Vagina (tissue), 2 donors: ENCODE measurements at regions of chr14 and their contacts with region 1.

Region 1: DNA sequence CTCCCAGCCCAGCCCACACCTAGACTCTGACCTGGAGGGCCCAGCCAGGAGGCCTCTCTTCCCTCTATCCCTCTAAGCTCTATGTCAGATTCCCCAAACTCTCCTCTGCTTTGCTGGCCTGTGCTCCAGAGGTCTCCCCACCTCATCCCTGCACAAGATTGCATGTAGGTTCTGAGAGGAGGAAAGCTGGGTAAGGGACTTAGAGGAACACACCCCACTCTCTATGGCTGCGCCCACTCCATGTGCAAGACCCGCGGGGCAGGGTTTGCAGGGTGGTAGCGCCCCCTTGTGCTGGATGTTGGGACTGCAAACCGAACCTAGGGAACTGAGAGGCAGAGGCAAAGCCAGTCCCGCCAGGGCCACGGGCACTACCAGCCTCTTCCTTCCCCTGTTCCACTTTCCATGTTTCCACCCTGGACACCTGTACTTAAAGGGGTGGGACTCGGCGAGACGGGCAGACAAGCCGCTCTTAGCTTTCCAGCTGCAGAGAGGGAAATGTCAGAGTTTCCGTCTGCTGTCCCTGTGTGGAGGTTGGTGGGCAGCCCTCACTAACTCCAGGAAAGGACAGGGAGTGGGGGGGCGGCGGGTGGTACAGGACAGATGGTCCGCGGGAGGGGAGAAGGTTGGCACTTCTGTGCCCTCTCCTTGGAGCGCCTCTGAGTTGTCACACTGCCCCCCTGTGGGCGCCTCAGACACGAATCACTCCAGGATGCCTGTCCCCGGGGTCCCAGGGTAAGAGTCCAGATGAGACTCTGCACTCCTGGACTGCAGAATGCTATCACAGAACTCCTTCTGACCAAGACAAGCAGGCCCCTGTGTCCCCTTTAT is 16.8 kb downstream of the MMP14 start:
- DNase-seq: no peak
- H3K4me3 ChIP-seq: peak overlapping the region; percentile 35 to 40
- H3K27ac ChIP-seq: peak overlapping the region; percentile 96
- H3K4me1 ChIP-seq: peaks cover 52% of the 10 kb centered on the region
- H3K27me3 ChIP-seq: no peaks in the 10 kb centered on the region
- CTCF ChIP-seq: peak; percentile 93 to 98 (median 96)
- POLR2A ChIP-seq: no peak

Region 2: DNA sequence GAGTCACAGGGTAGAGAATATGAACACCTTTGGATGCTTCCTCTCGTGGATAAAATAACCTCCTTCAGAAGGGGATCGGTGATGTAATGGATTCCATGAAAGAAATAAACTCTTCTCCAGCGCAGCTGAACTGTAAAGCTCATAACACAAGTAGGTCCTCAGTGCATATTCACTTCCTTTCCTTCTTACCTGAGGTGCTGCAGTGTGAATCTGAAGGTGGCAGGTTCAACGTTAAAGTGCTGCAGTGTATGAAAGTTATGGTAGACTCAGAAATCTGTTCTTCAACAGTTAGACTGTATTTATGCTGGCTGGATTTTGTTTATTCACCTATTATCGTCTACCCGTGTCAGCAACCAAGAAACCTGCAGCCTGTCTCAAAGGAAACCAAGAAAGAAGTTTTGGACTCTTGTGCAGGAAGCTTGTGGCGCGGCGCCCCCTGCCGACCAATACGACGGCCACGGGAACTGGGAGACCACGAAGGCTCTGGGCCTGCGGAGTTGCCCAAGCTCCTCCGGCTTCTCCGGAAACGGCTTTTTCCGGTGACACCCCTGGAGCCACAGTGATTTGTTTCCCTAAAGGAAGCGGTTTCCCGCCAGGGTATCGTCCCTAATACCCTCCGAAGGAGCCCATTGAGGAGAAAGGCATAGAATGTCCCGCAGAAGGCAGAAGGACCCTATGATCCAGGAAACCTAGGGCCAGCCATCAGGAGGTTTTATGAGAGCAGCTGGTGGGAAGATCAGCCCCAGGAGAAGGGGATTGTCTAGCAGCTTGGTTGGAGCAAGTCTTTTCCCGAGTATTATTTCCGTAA is 1979.6 kb before region 1 on chr14:
- intact Hi-C with region 1: no loop called
- DNase-seq: no peak
- H3K4me3 ChIP-seq: no peak overlapping the region
- H3K27ac ChIP-seq: no peak overlapping the region
- H3K4me1 ChIP-seq: no peaks in the 10 kb centered on the region
- H3K27me3 ChIP-seq: no peaks in the 10 kb centered on the region
- CTCF ChIP-seq: peak; percentile 24 to 47 (median 33)
- POLR2A ChIP-seq: no peak

Region 3: GRCh38 chr14:22556990-22557623 is 296.0 kb before region 1 on chr14:
- intact Hi-C with region 1: loop called (anchors 10 kb)
- DNase-seq: no peak
- H3K4me3 ChIP-seq: peak overlapping the region; percentile 18 to 42
- H3K27ac ChIP-seq: peak overlapping the region; percentile 43
- H3K4me1 ChIP-seq: peaks cover 43% of the 10 kb centered on the region
- H3K27me3 ChIP-seq: no peaks in the 10 kb centered on the region
- CTCF ChIP-seq: peak; percentile 100
- POLR2A ChIP-seq: no peak

Region 4: DNA sequence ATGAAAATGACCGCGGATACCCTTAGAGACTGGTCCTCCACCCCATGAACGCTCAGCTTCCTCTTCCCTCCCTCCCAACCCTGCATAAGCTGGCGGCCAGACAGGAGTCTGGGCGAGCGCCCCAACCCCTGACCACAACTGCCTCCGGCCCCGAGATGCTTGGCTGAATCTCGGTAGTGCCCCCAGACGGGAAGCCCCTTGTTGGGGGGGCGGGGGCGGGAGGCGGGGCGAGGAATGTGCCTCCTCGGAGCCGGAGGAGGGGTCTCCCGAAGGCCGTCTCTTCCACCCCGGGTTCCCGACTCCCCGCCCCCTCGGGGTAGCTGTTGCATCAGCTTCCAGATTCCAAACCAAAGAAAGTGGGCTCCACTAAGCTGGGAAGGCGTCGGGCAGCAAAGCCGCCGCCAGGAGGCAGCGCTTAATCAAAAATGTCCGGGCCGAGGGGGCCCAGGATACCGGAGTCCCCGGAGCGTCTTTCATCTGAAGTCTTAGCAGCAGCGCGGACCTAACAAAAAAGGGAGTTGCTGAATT is 30.5 kb before region 1 on chr14:
- intact Hi-C with region 1: loop called (anchors 1 kb)
- DNase-seq: no peak
- H3K4me3 ChIP-seq: peak overlapping the region; percentile 42 to 54
- H3K27ac ChIP-seq: peak overlapping the region; percentile 83
- H3K4me1 ChIP-seq: peaks cover 14% of the 10 kb centered on the region
- H3K27me3 ChIP-seq: no peaks in the 10 kb centered on the region
- CTCF ChIP-seq: peak; percentile 70 to 86 (median 74)
- POLR2A ChIP-seq: no peak

Region 5: GRCh38 chr14:22836301-22837113 is 16.6 kb before region 1 on chr14 and contains the start of gene MMP14:
- intact Hi-C with region 1: loop called (anchors 1 kb)
- DNase-seq: no peak
- H3K4me3 ChIP-seq: peak within 1 kb of the TSS; percentile 77 to 96
- H3K27ac ChIP-seq: peak within 1 kb of the TSS; percentile 96
- H3K4me1 ChIP-seq: peaks cover 43% of the 10 kb centered on the region
- H3K27me3 ChIP-seq: no peaks in the 10 kb centered on the region
- CTCF ChIP-seq: peak; percentile 4 to 52 (median 28)
- POLR2A ChIP-seq: peak in 1 of 2 donors; percentile 90
- total RNA-seq, gene MMP14: 187 TPM